Activated T-helper 1 cell treated with anti-CD3 and anti-CD28 coated beads, Interleukin-12 subunit alpha, Interleukin-12 subunit beta, Interleukin-2, Interleukin-4 antibody, amounts not matched to agents 30 ng/mL and 10 ng/mL and 1 ng/mL, durations not matched to agents 14 hours and 24 hours and 36 hours (primary cell): ENCODE measurements at regions of chr3 and their contacts with region 1.

Region 1: DNA sequence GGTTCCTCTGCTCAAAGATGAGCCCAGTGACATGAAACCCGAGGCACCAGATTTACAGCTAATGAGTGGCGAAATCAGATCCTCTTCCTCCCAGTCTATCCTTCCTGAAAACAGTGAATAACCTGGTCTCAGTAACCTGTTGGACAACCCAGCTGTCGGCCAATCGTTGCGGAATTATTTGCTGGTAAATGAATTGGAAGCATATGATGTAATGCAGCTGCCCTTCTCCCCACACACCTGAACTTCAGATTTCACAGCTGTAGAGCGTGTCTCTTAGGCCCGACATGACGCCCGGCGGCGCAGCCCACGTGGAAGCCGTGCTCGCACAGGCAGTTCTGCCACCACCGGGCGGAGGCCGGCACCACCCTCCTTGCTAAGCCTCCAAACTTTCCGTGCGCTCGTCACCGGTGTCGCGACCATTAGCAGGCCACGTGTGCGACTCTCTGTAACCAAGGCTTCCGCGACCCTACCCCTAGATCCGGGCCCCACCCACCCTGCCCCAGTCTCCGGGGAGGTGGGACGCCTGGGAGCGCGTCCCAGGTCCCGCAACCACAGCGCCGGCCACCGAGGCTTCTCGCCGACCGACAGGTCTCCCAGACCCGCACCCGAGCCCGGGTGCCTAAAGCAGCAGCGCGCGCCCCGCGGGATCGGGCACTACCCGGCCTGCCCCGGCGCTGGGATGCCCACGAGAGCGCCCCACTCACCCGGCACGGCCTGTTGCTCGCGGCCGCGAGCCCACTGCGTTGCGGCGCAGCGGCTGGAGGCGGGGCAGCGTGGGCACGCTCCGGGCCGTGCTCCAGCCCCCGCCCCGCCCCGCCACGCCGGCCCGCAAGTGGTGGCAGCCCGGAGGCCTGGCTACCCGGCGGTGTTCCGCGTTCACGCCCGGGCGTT is at the start of gene RIOX2:
- DNase-seq: peak; percentile 77
- H3K4me3 Mint-ChIP-seq: peak within 1 kb of the TSS; percentile 97
- H3K27ac Mint-ChIP-seq: peak within 1 kb of the TSS; percentile 99
- H3K4me1 Mint-ChIP-seq: peaks cover 92% of the 10 kb centered on the region
- H3K27me3 Mint-ChIP-seq: no peaks in the 10 kb centered on the region
- total RNA-seq, gene RIOX2: 85.4 and 90.9 TPM in 2 replicates

Region 2: DNA sequence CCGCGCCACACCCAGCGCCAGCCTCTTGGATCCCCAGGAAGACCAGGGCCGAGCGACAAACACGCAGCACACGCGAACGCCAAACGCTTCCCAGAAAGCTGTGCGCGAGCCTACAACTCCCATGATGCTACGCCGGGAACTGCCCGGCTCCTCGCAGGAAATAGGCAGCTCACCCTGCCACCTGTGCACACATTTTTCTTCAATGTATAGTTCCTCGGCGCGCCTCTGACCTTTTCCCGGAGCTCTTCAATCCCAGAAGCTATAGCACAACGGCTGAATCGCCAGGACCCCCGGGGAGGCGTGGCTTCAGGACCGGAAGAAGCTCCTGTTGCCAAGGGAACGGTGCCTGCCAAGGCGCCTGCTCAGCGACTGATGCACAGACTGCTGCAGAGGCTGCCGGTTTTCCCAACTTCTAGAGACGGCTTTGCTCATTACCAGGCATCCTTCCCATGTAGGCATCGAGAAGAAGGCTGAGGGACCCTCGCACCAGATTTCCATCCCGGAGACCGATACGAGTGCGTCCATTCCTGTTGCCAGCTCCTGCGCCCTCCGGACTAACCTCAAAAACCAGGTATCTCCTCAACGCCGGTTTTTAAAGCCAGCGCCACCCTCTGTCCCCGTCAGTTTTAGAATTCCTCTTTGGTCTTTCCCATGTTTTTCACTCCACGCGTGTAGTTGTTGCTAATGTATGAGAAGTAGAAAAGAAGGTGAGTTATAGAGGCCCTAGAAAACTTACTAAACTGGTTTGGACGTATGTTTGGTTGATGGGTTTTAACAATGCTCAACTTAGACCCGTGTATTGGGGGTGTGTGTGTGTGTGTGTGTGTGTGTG is 207.3 kb before region 1 on chr3 and contains the start of gene ARL6:
- intact Hi-C with region 1: loop called (anchors 1 kb)
- DNase-seq: peak; percentile 66
- H3K4me3 Mint-ChIP-seq: peak within 1 kb of the TSS; percentile 96
- H3K27ac Mint-ChIP-seq: peak within 1 kb of the TSS; percentile 95
- H3K4me1 Mint-ChIP-seq: peaks cover 31% of the 10 kb centered on the region
- H3K27me3 Mint-ChIP-seq: peaks cover 3% of the 10 kb centered on the region
- total RNA-seq, gene ARL6: 5.9 and 6.2 TPM in 2 replicates

Region 3: GRCh38 chr3:97821810-97822775 is 149.8 kb before region 1 on chr3 and contains the start of gene CRYBG3:
- intact Hi-C with region 1: loop called (anchors 1 kb)
- DNase-seq: peak; percentile 86
- H3K4me3 Mint-ChIP-seq: peak within 1 kb of the TSS; percentile 99
- H3K27ac Mint-ChIP-seq: peak within 1 kb of the TSS; percentile 92
- H3K4me1 Mint-ChIP-seq: peaks cover 40% of the 10 kb centered on the region
- H3K27me3 Mint-ChIP-seq: peaks cover 34% of the 10 kb centered on the region
- total RNA-seq, gene CRYBG3: 6.5 and 6.8 TPM in 2 replicates

Region 4: GRCh38 chr3:97957617-97958311 is 14.2 kb before region 1 on chr3:
- intact Hi-C with region 1: no loop called
- DNase-seq: no peak
- H3K4me3 Mint-ChIP-seq: no peak overlapping the region
- H3K27ac Mint-ChIP-seq: no peak overlapping the region
- H3K4me1 Mint-ChIP-seq: peaks cover 44% of the 10 kb centered on the region
- H3K27me3 Mint-ChIP-seq: no peaks in the 10 kb centered on the region

Region 5: GRCh38 chr3:97991293-97991682 is 19.4 kb after region 1 on chr3:
- intact Hi-C with region 1: loop called (anchors 2 kb)
- DNase-seq: no peak
- H3K4me3 Mint-ChIP-seq: peak overlapping the region; percentile 70
- H3K27ac Mint-ChIP-seq: peak overlapping the region; percentile 68
- H3K4me1 Mint-ChIP-seq: peaks cover 48% of the 10 kb centered on the region
- H3K27me3 Mint-ChIP-seq: no peaks in the 10 kb centered on the region

Region 6: GRCh38 chr3:98022978-98023820 is 51.3 kb after region 1 on chr3:
- intact Hi-C with region 1: loop called (anchors 1 kb)
- DNase-seq: peak; percentile 80
- H3K4me3 Mint-ChIP-seq: no peak overlapping the region
- H3K27ac Mint-ChIP-seq: no peak overlapping the region
- H3K4me1 Mint-ChIP-seq: peaks cover 24% of the 10 kb centered on the region
- H3K27me3 Mint-ChIP-seq: no peaks in the 10 kb centered on the region

Region 7: GRCh38 chr3:98199020-98199419 is 227.1 kb after region 1 on chr3:
- intact Hi-C with region 1: no loop called
- DNase-seq: no peak
- H3K4me3 Mint-ChIP-seq: no peak overlapping the region
- H3K27ac Mint-ChIP-seq: no peak overlapping the region
- H3K4me1 Mint-ChIP-seq: no peaks in the 10 kb centered on the region
- H3K27me3 Mint-ChIP-seq: peaks cover 5% of the 10 kb centered on the region

Region 8: DNA sequence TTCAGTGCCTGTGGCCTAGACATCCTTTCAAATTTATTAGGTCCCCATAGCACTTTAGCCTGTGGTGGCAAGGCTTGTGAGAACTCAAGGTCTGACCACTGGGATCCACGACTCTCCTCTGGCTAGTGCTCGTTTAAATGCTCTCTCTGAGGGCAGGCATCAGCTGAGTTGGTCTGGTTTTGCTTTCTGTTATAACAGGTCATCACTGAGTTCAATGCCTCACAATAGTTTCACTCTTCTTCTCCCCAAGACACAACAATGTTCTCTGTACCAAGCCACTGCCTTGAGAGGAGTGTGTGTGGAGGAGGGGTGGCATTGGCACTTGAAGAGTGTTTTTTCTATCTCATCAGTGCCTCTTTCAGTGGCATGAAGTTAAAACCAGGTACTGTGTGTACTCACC is 389.4 kb after region 1 on chr3:
- intact Hi-C with region 1: no loop called
- DNase-seq: no peak
- H3K4me3 Mint-ChIP-seq: no peak overlapping the region
- H3K27ac Mint-ChIP-seq: no peak overlapping the region
- H3K4me1 Mint-ChIP-seq: peaks cover 7% of the 10 kb centered on the region
- H3K27me3 Mint-ChIP-seq: peaks cover 8% of the 10 kb centered on the region